Ascending aorta (tissue), 2 donors: ENCODE measurements at regions of chr2 and their contacts with region 1.

Region 1: DNA sequence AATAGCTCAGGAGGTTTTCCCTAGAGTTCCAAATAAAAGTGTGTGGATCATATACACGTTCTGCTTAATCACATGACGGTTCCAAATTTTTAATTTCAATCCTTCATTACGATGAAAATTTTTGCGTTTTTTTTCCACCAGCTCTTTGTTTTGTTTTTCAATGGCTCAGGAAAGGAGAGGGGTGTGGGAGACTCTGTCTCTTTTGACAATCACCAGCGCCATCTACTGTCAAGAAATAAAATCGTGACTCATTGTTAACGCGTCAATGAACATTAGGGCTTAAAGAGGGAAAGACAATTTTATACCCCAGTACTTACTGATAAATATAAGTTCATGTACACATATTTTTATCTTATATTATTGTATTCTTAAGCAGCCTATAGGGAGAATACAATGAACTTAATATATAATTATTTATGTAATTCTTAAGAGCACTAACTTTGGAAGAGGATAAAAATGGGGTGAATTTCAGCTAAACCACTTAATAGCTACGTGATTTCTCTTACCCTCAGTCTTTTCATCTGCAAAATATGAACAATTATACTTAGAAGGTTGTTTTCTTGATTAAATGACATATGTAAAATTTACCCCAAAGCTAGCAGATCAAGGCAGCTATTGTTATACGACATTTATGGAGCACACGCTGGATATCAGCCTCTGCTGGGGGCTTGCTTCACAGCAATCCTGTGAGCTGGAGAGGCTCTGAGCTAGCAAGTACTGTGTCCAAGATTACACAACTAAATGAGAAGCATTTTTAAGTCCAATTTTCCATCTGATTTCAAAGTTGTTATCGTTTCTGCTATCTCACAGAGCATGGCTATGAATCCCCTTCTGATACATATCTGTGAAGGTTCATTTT is 47.4 kb upstream of the RMDN2 start:
- DNase-seq: no peak
- H3K4me3 ChIP-seq: no peak overlapping the region
- H3K27ac ChIP-seq: no peak overlapping the region
- H3K4me1 ChIP-seq: no peaks in the 10 kb centered on the region
- H3K27me3 ChIP-seq: no peaks in the 10 kb centered on the region
- CTCF ChIP-seq: peak; percentile 62 to 78 (median 73)

Region 2: GRCh38 chr2:37832590-37833197 is 45.0 kb before region 1 on chr2:
- intact Hi-C with region 1: loop called (anchors 1 kb)
- DNase-seq: peak; percentile 38 to 96
- H3K4me3 ChIP-seq: no peak overlapping the region
- H3K27ac ChIP-seq: no peak overlapping the region
- H3K4me1 ChIP-seq: peaks cover 0 to 16% of the 10 kb centered on the region in 2 donors
- H3K27me3 ChIP-seq: no peaks in the 10 kb centered on the region
- CTCF ChIP-seq: peak; percentile 63 to 91 (median 82)

Region 3: GRCh38 chr2:37851428-37851827 is 26.3 kb before region 1 on chr2:
- intact Hi-C with region 1: no loop called
- DNase-seq: no peak
- H3K4me3 ChIP-seq: no peak overlapping the region
- H3K27ac ChIP-seq: peak overlapping the region; percentile 29 to 43
- H3K4me1 ChIP-seq: peaks cover 12 to 23% of the 10 kb centered on the region in 2 donors
- H3K27me3 ChIP-seq: no peaks in the 10 kb centered on the region
- CTCF ChIP-seq: no peak

Region 4: GRCh38 chr2:38386377-38386776 is 508.7 kb after region 1 on chr2:
- intact Hi-C with region 1: no loop called
- DNase-seq: no peak
- H3K4me3 ChIP-seq: no peak overlapping the region
- H3K27ac ChIP-seq: no peak overlapping the region
- H3K4me1 ChIP-seq: no peaks in the 10 kb centered on the region
- H3K27me3 ChIP-seq: no peaks in the 10 kb centered on the region
- CTCF ChIP-seq: no peak